ENCODE measurements at regions of chr6 and their contacts with region 1.

Region 1: DNA sequence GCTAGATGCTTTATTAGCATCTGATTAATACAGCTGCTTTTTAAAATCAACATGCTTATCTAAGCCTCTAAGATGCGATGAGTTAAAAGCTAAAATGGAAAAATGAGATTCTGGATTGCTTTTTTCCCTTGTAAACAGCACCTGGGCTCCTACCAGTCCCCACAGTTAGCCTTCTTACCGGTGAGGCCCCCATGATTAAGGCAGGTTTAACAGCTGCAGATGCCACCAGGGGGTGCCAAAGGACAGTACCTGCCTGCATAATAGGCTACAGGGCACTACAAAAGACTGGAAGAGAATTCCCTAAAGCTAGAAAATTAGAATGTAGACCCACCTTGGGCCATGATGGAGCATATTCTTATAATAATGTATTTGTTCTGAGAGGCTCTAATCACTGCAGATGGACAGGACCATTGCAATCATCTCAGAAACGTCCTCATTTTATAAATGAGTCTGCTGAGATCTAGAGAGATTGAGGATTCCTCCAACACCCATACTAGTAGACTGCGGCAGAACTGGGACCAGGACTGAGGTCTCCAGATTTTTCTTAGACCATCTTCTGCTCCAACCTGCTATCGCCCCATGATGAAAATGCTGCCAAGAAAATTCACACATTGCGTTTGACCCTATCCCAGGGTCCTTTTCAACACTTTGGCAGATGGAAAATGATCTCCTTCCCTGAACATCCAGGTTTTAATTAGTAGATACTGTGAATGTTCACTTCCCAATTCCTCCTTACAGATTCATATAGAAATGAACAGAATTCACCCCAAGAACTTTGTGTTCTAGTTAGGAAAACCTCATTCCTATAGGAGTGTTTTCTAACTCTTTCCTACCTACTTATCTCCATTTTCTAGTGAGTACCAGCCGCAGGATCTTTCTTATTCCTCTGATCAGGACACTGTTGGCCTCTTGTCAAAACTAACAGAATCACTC is 148.8 kb downstream of the RPS12 start:
- DNase-seq: peak; percentile 77
- H3K4me3 Mint-ChIP-seq: no peak overlapping the region
- H3K27ac Mint-ChIP-seq: no peak overlapping the region
- H3K4me1 Mint-ChIP-seq: no peaks in the 10 kb centered on the region
- H3K27me3 Mint-ChIP-seq: peaks cover 29% of the 10 kb centered on the region

Region 2: GRCh38 chr6:132530293-132530974 is 432.8 kb before region 1 on chr6:
- CTCF ChIA-PET with region 1: no interaction called
- intact Hi-C with region 1: loop called (anchors 1 kb)
- DNase-seq: peak; percentile 81
- H3K4me3 Mint-ChIP-seq: no peak overlapping the region
- H3K27ac Mint-ChIP-seq: no peak overlapping the region
- H3K4me1 Mint-ChIP-seq: peaks cover 2% of the 10 kb centered on the region
- H3K27me3 Mint-ChIP-seq: peaks cover 7% of the 10 kb centered on the region

Region 3: DNA sequence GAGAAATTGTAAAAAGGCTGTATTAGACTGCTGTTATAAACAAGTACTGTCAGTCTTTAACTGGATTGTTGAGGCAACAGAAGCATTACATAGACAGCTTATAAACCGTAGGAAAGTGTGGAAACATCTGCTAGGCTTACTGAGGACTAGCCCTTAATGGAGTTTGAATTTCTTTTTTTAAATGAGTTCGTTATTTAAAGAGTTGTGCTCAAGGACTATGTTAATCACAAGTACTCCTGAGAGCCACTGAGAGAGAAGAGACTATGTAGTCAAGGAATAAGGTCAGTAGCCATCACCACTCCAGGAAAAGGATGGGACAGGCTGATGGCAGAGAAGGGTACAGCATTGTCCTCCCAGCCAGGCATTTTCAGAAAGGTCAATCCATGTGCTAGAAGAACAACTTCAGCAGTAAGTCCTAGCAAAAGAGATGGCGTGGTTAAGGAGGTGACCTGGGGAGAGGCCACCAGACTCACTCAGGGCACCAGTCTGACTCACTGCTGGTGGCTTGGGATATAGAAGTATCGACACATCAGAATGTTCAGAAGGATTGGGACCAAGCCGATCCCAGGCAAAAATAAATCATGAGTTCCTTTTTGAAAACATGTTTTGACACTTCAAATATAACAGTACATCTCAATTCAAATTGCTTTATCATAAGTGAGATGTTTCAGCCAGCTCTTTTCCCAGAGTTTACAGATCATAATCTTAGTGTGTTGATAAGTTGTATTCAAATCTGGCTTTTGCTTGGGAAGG is 142.4 kb before region 1 on chr6:
- CTCF ChIA-PET with region 1: interaction called, 20 read pairs
- intact Hi-C with region 1: loop called (anchors 2 kb)
- DNase-seq: no peak
- H3K4me3 Mint-ChIP-seq: no peak overlapping the region
- H3K27ac Mint-ChIP-seq: peak overlapping the region; percentile 72
- H3K4me1 Mint-ChIP-seq: peaks cover 42% of the 10 kb centered on the region
- H3K27me3 Mint-ChIP-seq: no peaks in the 10 kb centered on the region

Region 4: GRCh38 chr6:133033263-133033662 is 70.1 kb after region 1 on chr6:
- CTCF ChIA-PET with region 1: no interaction called
- intact Hi-C with region 1: loop called (anchors 5 kb)
- DNase-seq: no peak
- H3K4me3 Mint-ChIP-seq: no peak overlapping the region
- H3K27ac Mint-ChIP-seq: no peak overlapping the region
- H3K4me1 Mint-ChIP-seq: no peaks in the 10 kb centered on the region
- H3K27me3 Mint-ChIP-seq: peaks cover 3% of the 10 kb centered on the region

Region 5: GRCh38 chr6:133512410-133513016 is 549.3 kb after region 1 on chr6:
- CTCF ChIA-PET with region 1: no interaction called
- intact Hi-C with region 1: loop called (anchors 1 kb)
- DNase-seq: peak; percentile 58
- H3K4me3 Mint-ChIP-seq: no peak overlapping the region
- H3K27ac Mint-ChIP-seq: no peak overlapping the region
- H3K4me1 Mint-ChIP-seq: no peaks in the 10 kb centered on the region
- H3K27me3 Mint-ChIP-seq: peaks cover 15% of the 10 kb centered on the region

Region 6: GRCh38 chr6:133895573-133896343 is 932.6 kb after region 1 on chr6:
- CTCF ChIA-PET with region 1: no interaction called
- intact Hi-C with region 1: no loop called
- DNase-seq: no peak
- H3K4me3 Mint-ChIP-seq: no peak overlapping the region
- H3K27ac Mint-ChIP-seq: no peak overlapping the region
- H3K4me1 Mint-ChIP-seq: peaks cover 23% of the 10 kb centered on the region
- H3K27me3 Mint-ChIP-seq: peaks cover 78% of the 10 kb centered on the region

Region 7: DNA sequence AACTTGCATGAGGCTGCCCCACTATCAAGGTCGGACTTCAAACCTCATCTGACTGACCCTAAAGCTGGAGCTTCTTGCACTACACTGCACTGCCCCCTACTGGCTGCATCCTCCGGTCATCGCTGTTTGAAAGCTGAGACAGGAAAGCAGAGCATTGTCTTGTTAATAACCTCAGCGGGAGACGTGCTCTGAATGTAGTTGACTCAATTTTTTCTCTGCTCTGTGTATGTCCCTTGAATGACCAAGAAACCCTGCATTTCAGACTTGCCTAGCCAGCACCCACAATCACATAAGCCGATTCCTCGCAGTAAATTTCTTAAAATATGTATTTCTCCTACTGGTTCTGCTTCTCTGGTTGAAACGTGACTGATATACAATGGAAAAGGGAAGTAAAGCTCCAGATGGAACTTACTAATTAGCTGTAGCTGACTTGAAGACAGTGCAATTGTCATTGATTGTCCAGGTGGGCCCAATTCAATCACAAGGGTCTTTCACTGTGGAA is 953.5 kb after region 1 on chr6:
- CTCF ChIA-PET with region 1: no interaction called
- intact Hi-C with region 1: loop called (anchors 2 kb)
- DNase-seq: peak; percentile 89
- H3K4me3 Mint-ChIP-seq: no peak overlapping the region
- H3K27ac Mint-ChIP-seq: no peak overlapping the region
- H3K4me1 Mint-ChIP-seq: peaks cover 4% of the 10 kb centered on the region
- H3K27me3 Mint-ChIP-seq: peaks cover 9% of the 10 kb centered on the region

Region 8: GRCh38 chr6:134097114-134097707 is 1134.0 kb after region 1 on chr6:
- CTCF ChIA-PET with region 1: no interaction called
- intact Hi-C with region 1: loop called (anchors 2 kb)
- DNase-seq: peak; percentile 80
- H3K4me3 Mint-ChIP-seq: no peak overlapping the region
- H3K27ac Mint-ChIP-seq: no peak overlapping the region
- H3K4me1 Mint-ChIP-seq: no peaks in the 10 kb centered on the region
- H3K27me3 Mint-ChIP-seq: peaks cover 7% of the 10 kb centered on the region